ENCODE measurements at regions of chrX and their contacts with region 1.

Region 1: DNA sequence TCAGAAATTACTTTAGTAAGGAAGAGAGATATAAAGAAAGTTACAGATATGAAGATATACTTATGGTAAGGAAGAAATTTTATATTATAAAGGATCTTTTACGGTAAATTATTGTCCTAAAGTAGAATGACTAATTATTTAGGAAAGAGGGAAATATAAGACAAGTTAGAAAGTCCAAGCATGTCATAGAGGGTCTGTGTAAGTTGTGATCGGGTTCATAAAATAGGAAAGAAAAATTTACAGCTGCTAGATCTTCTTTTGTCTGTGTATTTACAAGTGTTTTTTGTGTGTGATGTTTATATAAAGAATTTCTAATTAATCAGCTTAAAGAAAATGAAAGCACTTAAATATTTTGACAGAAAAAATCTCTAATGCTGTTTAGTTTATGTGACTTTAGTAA is 1054.9 kb upstream of the DIAPH2 start:
- DNase-seq: no peak
- ATAC-seq: no peak
- H3K4me3 ChIP-seq: no peak overlapping the region
- H3K27ac ChIP-seq: no peak overlapping the region
- H3K4me1 ChIP-seq: no peaks in the 10 kb centered on the region
- H3K27me3 ChIP-seq: peaks cover 0 to 5% (median 0%) of the 10 kb centered on the region in 7 donors
- CTCF ChIP-seq: no peak

Region 2: GRCh38 chrX:95728446-95728845 is 98.7 kb after region 1 on chrX:
- intact Hi-C with region 1: no loop called
- DNase-seq: no peak
- ATAC-seq: no peak
- H3K4me3 ChIP-seq: no peak overlapping the region
- H3K27ac ChIP-seq: no peak overlapping the region
- H3K4me1 ChIP-seq: no peaks in the 10 kb centered on the region
- H3K27me3 ChIP-seq: peaks cover 0 to 19% (median 0%) of the 10 kb centered on the region in 7 donors
- CTCF ChIP-seq: no peak

Region 3: GRCh38 chrX:96563663-96564062 is 933.9 kb after region 1 on chrX:
- intact Hi-C with region 1: loop called in 1 of 10 experiments (anchors 10 kb)
- DNase-seq: no peak
- ATAC-seq: peak in 1 of 8 donors; percentile 48
- H3K4me3 ChIP-seq: no peak overlapping the region
- H3K27ac ChIP-seq: no peak overlapping the region
- H3K4me1 ChIP-seq: no peaks in the 10 kb centered on the region
- H3K27me3 ChIP-seq: peaks cover 0 to 10% (median 0%) of the 10 kb centered on the region in 7 donors
- CTCF ChIP-seq: no peak